Esophagus muscularis mucosa (tissue), 4 donors: ENCODE measurements at regions of chr4 and their contacts with region 1.

Region 1: DNA sequence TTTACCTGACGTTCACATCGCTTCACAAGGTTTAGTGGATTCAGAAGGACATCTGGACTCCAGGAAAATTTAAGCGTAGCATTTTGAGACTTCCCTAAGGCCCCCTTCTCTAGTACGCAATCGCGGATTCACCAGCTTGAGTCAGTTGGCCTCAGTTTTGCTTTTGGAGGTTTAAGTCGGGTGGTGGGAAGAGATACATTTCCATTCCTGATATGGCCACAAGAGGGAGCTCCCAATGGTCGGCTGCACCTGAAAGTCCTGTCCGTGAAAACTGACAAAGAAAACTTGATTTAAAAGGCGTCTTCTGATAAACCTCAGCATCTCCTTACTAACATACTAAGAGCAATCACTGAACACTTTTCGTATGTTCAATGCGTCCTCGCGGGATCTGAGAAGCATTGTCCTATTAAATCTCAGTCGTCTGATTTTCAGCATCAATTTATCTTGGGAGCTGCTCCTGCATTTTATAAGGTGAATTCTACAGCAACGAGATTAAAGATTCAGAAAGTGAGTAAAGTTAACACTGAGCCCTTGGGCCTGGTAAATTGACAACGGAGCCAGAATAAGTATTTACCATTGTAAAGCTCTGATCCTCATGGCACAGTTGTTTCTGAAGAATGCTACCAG is 50.6 kb downstream of the LGI2 start:
- DNase-seq: no peak
- H3K4me3 ChIP-seq: peak overlapping the region; percentile 28 to 40 (median 34)
- H3K27ac ChIP-seq: peak overlapping the region; percentile 50 to 74 (median 64)
- H3K4me1 ChIP-seq: peaks cover 23 to 41% (median 39%) of the 10 kb centered on the region in 4 donors
- H3K27me3 ChIP-seq: no peaks in the 10 kb centered on the region
- CTCF ChIP-seq: peak; percentile 83 to 93 (median 88)
- EP300 ChIP-seq: no peak
- POLR2A ChIP-seq: no peak

Region 2: DNA sequence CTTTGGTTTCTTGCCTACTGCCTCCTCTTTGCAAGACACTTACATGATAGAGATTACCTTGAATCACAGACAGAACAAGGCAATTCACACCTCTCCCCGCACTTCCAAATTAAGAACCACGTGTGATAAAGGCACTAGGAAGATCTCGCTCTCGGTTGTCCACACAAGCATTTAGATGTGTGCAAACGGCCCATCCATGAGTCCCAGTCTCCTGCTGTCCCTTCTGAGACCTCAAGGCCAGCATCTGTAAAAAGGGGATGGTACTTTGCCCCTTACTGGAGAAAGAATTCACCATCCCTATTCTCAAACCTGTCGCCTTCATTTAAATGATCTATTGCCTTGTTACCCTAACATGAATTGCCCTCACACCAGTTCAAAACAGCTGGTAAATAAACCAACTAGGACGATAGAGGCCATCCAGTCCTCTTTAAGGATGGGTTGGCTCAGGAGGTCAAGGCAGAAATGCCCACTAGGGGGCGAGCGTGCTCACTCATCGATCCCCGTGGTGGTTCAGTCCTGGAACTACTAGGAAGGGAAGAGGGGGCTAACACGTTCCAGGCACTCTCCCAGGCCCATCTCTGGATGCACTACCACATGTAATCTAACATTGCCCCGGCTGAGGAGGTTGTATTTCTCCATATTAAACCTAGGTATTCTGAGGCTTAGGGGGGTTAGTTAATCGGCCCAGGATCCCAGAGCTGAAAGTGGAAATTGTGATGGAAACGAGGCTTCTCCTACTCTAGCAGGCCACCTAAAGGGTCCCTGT is 491.6 kb before region 1 on chr4:
- intact Hi-C with region 1: loop called (anchors 5 kb)
- DNase-seq: no peak
- H3K4me3 ChIP-seq: no peak overlapping the region
- H3K27ac ChIP-seq: no peak overlapping the region
- H3K4me1 ChIP-seq: peaks cover 0 to 10% (median 3%) of the 10 kb centered on the region in 4 donors
- H3K27me3 ChIP-seq: no peaks in the 10 kb centered on the region
- CTCF ChIP-seq: peak; percentile 66 to 89 (median 84)
- EP300 ChIP-seq: no peak
- POLR2A ChIP-seq: no peak

Region 3: GRCh38 chr4:24912252-24913118 is 67.7 kb before region 1 on chr4 and contains the start of gene CCDC149:
- intact Hi-C with region 1: loop called (anchors 5 kb)
- DNase-seq: no peak
- H3K4me3 ChIP-seq: peak within 1 kb of the TSS; percentile 68 to 90 (median 74)
- H3K27ac ChIP-seq: peak within 1 kb of the TSS; percentile 90 to 92 (median 92)
- H3K4me1 ChIP-seq: peaks cover 6 to 37% (median 25%) of the 10 kb centered on the region in 4 donors
- H3K27me3 ChIP-seq: no peaks in the 10 kb centered on the region
- CTCF ChIP-seq: peak in 2 of 3 experiments; percentile 5 to 10
- EP300 ChIP-seq: no peak
- POLR2A ChIP-seq: no peak
- total RNA-seq, gene CCDC149: 21.0 to 37.9 (median 34.0) TPM

Region 4: DNA sequence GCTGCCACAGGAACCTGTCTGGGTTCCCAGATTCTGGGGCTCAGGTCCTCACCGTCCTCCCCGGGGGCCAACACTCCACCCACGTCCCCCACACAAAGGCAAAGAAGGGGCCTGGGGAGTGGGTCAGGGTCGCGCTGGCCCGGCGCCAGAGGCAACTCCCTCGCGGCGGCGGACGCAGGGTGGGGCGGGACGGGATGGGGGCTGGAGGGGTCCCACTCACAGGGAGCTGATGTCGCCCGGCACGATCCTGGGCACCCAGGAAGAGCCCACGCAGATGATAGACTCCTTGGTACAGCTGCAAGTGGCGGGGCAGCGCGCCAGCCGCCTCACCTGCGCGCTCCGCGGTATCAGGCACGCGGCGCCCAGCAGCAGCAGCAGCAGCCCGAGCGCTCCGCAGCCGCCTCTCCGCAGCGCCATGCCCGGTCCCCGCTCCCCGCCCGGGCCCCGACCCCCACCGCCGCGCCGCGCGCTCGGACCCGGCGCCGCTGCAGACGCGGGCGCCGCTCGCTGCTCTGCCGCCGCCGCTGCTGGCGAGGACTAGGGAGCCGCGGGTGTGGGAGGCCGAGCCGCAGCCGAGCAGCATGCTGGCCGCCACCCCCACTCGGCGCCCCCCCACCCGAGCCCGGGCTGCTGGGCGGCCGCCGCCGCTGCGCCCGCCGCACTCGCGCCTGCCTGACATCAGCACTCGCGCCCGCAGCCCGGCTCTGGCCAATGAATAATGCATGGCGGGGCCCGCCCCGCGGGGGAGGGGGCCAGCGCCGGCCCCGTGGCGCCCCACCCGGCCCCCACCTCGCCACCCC is 50.3 kb after region 1 on chr4 and contains the start of gene LGI2:
- intact Hi-C with region 1: loop called (anchors 5 kb)
- DNase-seq: no peak
- H3K4me3 ChIP-seq: peak within 1 kb of the TSS; percentile 68 to 74 (median 70)
- H3K27ac ChIP-seq: peak within 1 kb of the TSS; percentile 82 to 86 (median 84)
- H3K4me1 ChIP-seq: peaks cover 13 to 44% (median 33%) of the 10 kb centered on the region in 4 donors
- H3K27me3 ChIP-seq: no peaks in the 10 kb centered on the region
- CTCF ChIP-seq: no peak
- EP300 ChIP-seq: no peak
- POLR2A ChIP-seq: no peak
- total RNA-seq, gene LGI2: 4.6 to 13.7 (median 9.7) TPM

Region 5: GRCh38 chr4:25144870-25145481 is 164.8 kb after region 1 on chr4:
- intact Hi-C with region 1: loop called (anchors 2 kb)
- DNase-seq: no peak
- H3K4me3 ChIP-seq: no peak overlapping the region
- H3K27ac ChIP-seq: no peak overlapping the region
- H3K4me1 ChIP-seq: no peaks in the 10 kb centered on the region
- H3K27me3 ChIP-seq: no peaks in the 10 kb centered on the region
- CTCF ChIP-seq: peak; percentile 45 to 61 (median 46)
- EP300 ChIP-seq: no peak
- POLR2A ChIP-seq: no peak